GM10248 (cell line): ENCODE measurements at regions of chr13 and their contacts with region 1.

Region 1: DNA sequence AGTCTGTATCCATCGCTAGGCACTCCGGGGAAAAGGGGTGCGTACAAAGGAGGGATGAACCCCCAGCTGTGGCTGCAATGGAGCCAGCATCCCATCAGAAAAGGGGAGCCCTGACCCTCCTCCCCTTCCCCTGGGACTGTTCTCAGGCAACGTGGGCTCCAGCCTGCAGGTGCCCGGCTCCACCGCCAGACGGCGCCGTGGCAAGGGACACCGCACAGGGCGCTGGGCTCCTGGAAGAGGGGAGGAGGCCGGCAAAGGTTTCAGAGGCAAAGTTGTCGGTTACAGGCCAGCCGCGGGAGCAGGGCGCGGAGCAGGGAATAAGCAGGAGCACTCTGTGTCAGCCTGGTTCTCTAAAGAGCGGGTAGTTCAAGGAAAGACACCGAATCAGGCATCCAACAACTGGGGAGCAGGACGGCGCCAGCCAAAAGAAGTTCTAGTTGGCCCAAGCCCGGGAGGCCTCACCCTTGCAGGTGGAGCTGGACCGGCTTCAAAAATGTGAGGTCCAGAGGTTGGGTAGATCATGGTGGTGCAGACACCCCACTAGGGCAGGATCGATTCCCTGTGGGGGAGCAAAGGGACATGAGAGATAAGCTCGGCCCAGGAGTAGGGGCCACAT is 53.0 kb upstream of the ATP12A start:
- DNase-seq: no peak
- CTCF ChIP-seq: no peak

Region 2: DNA sequence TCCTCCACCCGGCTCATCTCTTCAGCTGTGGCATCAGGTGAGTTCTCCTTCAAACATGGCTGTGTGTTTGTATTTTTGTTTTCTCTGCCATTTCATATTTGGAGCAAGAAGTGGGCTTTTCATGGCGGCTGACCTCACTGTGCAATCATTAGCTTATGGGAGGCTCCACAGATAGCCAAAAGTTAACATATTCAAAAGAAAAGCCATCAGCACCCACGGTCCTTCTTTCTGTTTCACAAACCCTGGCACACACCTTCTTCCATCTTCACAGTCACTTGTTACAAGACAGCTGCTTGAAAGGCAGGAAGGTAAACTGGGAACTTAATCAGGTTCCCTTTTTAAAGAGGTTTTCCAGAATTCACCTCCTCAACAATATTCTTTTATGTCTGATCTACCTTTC is 16.3 kb before region 1 on chr13:
- CTCF ChIA-PET with region 1: interaction called, 20 read pairs
- POLR2A ChIA-PET with region 1: no interaction called
- DNase-seq: peak; percentile 25
- CTCF ChIP-seq: no peak